ENCODE measurements at regions of chr3 and their contacts with region 1.

Region 1: DNA sequence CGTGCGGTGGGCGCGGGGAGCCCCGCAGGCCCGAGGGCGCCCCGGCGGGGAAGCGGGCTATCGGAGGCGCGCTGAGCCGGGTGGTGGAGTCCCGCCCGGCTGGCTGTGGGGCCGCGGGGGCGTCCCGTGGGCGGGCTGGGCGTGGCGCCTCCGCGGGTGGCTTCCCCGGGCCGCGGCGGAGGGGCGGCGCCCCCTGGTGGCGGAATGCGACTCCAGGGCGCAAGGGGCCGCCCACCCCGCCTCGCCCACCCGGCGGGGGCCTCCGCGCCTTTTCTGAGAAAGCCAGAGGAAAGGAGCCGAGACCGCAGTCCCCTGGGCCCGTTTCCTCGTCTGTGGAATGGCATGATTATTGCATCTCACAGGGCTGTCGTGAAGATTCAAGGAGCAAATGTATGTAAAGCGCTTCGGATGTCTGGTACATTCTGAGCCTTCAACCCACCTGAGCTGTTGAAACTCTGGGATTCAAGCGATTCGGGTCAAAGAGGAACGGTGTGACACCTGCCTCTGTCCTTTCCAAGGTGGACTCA is 31.9 kb upstream of the RAB6B start:
- DNase-seq: peak; percentile 60
- H3K4me3 Mint-ChIP-seq: no peak overlapping the region
- H3K27ac Mint-ChIP-seq: no peak overlapping the region
- H3K4me1 Mint-ChIP-seq: peaks cover 6% of the 10 kb centered on the region
- H3K27me3 Mint-ChIP-seq: peaks cover 2% of the 10 kb centered on the region

Region 2: GRCh38 chr3:133494469-133494868 is 433.1 kb before region 1 on chr3:
- CTCF ChIA-PET with region 1: no interaction called
- intact Hi-C with region 1: loop called (anchors 10 kb)
- DNase-seq: peak; percentile 35
- H3K4me3 Mint-ChIP-seq: no peak overlapping the region
- H3K27ac Mint-ChIP-seq: no peak overlapping the region
- H3K4me1 Mint-ChIP-seq: peaks cover 44% of the 10 kb centered on the region
- H3K27me3 Mint-ChIP-seq: no peaks in the 10 kb centered on the region

Region 3: GRCh38 chr3:133821767-133822638 is 105.6 kb before region 1 on chr3:
- CTCF ChIA-PET with region 1: interaction called, 17 read pairs
- intact Hi-C with region 1: loop called (anchors 1 kb)
- DNase-seq: no peak
- H3K4me3 Mint-ChIP-seq: no peak overlapping the region
- H3K27ac Mint-ChIP-seq: no peak overlapping the region
- H3K4me1 Mint-ChIP-seq: peaks cover 2% of the 10 kb centered on the region
- H3K27me3 Mint-ChIP-seq: no peaks in the 10 kb centered on the region

Region 4: GRCh38 chr3:133910422-133910821 is 17.2 kb before region 1 on chr3:
- CTCF ChIA-PET with region 1: no interaction called
- intact Hi-C with region 1: no loop called
- DNase-seq: no peak
- H3K4me3 Mint-ChIP-seq: no peak overlapping the region
- H3K27ac Mint-ChIP-seq: no peak overlapping the region
- H3K4me1 Mint-ChIP-seq: no peaks in the 10 kb centered on the region
- H3K27me3 Mint-ChIP-seq: peaks cover 16% of the 10 kb centered on the region

Region 5: DNA sequence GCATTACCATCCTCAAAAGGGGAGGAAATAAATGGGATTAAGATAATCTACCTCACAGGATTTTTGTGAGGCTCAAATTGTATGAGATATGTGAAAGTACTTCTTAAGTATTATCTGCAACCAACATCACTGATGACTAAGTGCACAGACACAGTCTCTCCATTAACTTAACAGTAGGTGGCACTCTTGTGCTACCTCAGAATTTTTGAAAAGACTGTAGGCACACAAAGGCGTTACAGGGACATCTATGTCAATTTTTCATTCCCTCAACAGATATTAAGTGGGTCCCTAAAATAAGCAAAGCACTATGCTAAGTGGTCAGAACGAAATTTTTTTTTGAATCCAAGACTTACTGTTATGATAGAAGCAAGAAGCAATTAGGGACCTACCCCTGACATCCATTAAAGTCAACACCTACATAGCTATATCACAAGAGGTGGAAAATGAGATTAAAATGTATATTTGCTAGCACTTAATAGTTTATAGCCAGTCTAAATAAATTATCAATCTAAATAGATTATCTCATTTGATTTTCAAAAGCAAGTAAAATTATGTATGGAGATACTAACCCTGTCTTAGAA is 270.2 kb after region 1 on chr3:
- CTCF ChIA-PET with region 1: no interaction called
- intact Hi-C with region 1: loop called (anchors 5 kb)
- DNase-seq: peak; percentile 14
- H3K4me3 Mint-ChIP-seq: no peak overlapping the region
- H3K27ac Mint-ChIP-seq: no peak overlapping the region
- H3K4me1 Mint-ChIP-seq: peaks cover 7% of the 10 kb centered on the region
- H3K27me3 Mint-ChIP-seq: no peaks in the 10 kb centered on the region

Region 6: GRCh38 chr3:134373994-134374790 is 446.6 kb after region 1 on chr3 and contains the start of gene AMOTL2:
- CTCF ChIA-PET with region 1: no interaction called
- intact Hi-C with region 1: loop called (anchors 10 kb)
- DNase-seq: peak; percentile 31
- H3K4me3 Mint-ChIP-seq: peak within 1 kb of the TSS; percentile 79
- H3K27ac Mint-ChIP-seq: no peak within 1 kb of the TSS
- H3K4me1 Mint-ChIP-seq: peaks cover 14% of the 10 kb centered on the region
- H3K27me3 Mint-ChIP-seq: peaks cover 28% of the 10 kb centered on the region
- total RNA-seq, gene AMOTL2: 0.31 TPM in 1 of 2 experiments, not detected in the other

Measured in activated naive CD4-positive, alpha-beta T cell treated with anti-CD3 and anti-CD28 coated beads for 36 hours (primary cell).